ENCODE measurements at regions of chr2 and their contacts with region 1.

Region 1: GRCh38 chr2:130332271-130333073 is 10.2 kb upstream of the IMP4 start:
- DNase-seq: peak; percentile 75 to 80 (median 78)
- ATAC-seq: peak; percentile 76
- H3K4me3 ChIP-seq: no peak overlapping the region
- H3K27ac ChIP-seq: no peak overlapping the region
- H3K4me1 ChIP-seq: peaks cover 15% of the 10 kb centered on the region in 2 experiments; a peak in 4 of 5 replicates
- H3K27me3 ChIP-seq: peaks cover 4 to 13% of the 10 kb centered on the region in 2 experiments; a peak in 4 of 5 replicates
- CTCF ChIP-seq: peak; percentile 96 to 97 (median 96)
- EP300 ChIP-seq: 0 out of 2 replicates have a peak, but pooled peaks have one; percentile 4
- POLR2A ChIP-seq: no peak
- RAD21 ChIP-seq: peak; percentile 91 to 94

Region 2: GRCh38 chr2:130156624-130157004 is 175.9 kb before region 1 on chr2:
- CTCF ChIA-PET with region 1: interaction called, 4 read pairs
- POLR2A ChIA-PET with region 1: no interaction called
- in situ Hi-C with region 1: no loop called
- intact Hi-C with region 1: loop called (anchors 2 kb)
- DNase-seq: no peak
- ATAC-seq: no peak
- H3K4me3 ChIP-seq: no peak overlapping the region
- H3K27ac ChIP-seq: no peak overlapping the region
- H3K4me1 ChIP-seq: peaks cover 0 to 32% of the 10 kb centered on the region in 2 experiments; a peak in 3 of 5 replicates
- H3K27me3 ChIP-seq: no peaks in the 10 kb centered on the region
- CTCF ChIP-seq: no peak
- EP300 ChIP-seq: no peak
- POLR2A ChIP-seq: no peak
- RAD21 ChIP-seq: no peak

Region 3: DNA sequence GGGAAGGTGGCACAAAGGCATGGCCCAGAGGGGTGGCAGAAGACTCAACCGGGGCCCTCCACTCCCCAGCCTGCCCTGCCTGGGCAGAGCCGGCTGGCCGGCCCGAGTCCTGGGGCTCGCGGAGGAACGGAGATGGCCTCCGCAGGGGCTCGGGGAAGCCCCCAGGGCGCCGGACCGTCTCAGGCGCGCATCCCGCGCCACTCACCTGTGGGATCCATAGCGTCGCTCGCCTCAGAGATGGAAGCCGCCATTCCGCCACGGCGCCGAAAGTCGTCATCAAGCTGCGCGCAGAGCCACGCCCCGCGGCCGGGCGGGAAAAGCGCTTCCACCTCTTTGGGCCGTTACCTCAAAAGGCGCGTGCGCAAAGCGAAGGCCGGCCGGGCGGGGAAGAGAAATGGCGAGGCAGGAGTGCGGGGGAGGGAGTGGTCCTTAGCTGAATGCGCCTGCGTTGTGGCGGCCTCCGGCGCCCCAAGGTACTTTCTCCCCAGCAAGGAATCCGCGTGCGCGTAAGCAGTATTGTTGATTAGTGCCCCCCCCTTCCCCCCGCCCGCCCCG is 151.1 kb before region 1 on chr2 and contains the start of gene SMPD4:
- CTCF ChIA-PET with region 1: interaction called, 6 read pairs
- POLR2A ChIA-PET with region 1: interaction called, 4 read pairs
- in situ Hi-C with region 1: loop called (anchors 5 kb)
- intact Hi-C with region 1: no loop called
- DNase-seq: peak; percentile 73 to 97 (median 83)
- ATAC-seq: peak; percentile 77
- H3K4me3 ChIP-seq: peak within 1 kb of the TSS; percentile 100
- H3K27ac ChIP-seq: peak within 1 kb of the TSS; percentile 97
- H3K4me1 ChIP-seq: peaks cover 7 to 45% of the 10 kb centered on the region in 2 experiments; a peak in 4 of 5 replicates
- H3K27me3 ChIP-seq: no peaks in the 10 kb centered on the region
- CTCF ChIP-seq: 0 out of 6 replicates have a peak, but pooled peaks of 1 of the 3 experiments have one; percentile 10
- EP300 ChIP-seq: no peak
- POLR2A ChIP-seq: peak; percentile 73
- RAD21 ChIP-seq: no peak
- polyA plus RNA-seq, gene SMPD4: 7.5 to 8.8 TPM

Region 4: DNA sequence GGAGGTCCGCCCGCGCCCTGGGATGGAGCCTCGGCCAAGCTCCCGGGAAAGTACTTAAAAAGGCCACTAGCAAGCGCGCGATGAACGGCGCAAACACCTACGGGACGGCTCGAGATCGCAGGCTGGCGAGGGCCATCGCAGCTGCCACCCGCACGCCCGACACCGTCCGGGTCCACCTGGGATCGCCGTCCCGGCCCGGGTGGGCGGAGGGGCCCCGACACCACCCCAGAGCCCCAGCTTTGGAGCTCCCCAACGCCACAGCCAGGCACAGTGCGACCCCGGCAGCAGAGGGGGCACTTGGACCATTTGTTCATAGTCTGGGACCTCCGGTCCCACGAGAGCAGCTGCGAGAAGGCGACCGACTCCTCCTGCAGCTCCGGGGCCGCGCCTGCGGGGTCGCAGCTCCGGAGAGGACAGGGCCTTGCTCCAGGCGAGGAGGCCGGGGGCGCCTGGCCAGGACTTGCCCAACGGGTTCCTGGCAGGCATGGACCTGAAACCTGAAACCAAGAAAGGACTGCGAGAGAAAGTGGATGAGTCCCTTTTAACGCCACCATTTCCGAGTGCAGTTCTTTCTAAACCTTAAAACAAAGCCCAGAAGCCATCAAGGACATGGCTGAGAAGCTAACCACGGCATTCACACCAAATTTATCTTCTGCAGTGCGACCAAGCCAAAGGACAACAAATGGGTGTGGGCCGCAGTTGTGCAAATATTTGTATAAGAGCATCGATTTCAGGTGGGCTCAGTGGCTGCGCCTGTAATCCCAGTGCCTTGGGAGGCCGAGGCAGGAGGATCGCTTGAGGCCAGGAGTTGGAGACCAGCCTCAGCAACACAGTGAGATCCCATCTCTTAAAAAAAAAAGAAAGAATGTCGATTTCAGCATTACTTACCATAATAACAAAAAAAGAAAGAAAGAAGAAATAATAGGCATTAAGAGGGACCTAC is 43.7 kb before region 1 on chr2:
- CTCF ChIA-PET with region 1: no interaction called
- POLR2A ChIA-PET with region 1: no interaction called
- in situ Hi-C with region 1: loop called (anchors 5 kb)
- intact Hi-C with region 1: loop called (anchors 1 kb)
- DNase-seq: peak; percentile 51 to 64 (median 56)
- ATAC-seq: peak; percentile 88
- H3K4me3 ChIP-seq: 0 out of 2 replicates have a peak overlapping the region, but pooled peaks have one; percentile 9
- H3K27ac ChIP-seq: no peak overlapping the region
- H3K4me1 ChIP-seq: peaks cover 0 to 18% of the 10 kb centered on the region in 2 experiments; a peak in 2 of 5 replicates
- H3K27me3 ChIP-seq: peaks cover 26 to 37% of the 10 kb centered on the region in 2 experiments
- CTCF ChIP-seq: peak; percentile 29 to 70 (median 65); a peak in 5 of 6 replicates
- EP300 ChIP-seq: no peak
- POLR2A ChIP-seq: no peak
- RAD21 ChIP-seq: peak in 1 of 2 experiments; percentile 48; a peak in 2 of 4 replicates

Measured in K562 (cell line).